Activated CD4-positive, alpha-beta memory T cell treated with anti-CD3 and anti-CD28 coated beads, Interleukin-2, amount 10 ng/mL, durations not matched to agents 7 days and 5 days (primary cell): ENCODE measurements at regions of chr17 and their contacts with region 1.

Region 1: GRCh38 chr17:5065227-5065744 is 13.0 kb upstream of the ZFP3 start:
- DNase-seq: no peak
- H3K4me3 Mint-ChIP-seq: no peak overlapping the region
- H3K27ac Mint-ChIP-seq: no peak overlapping the region
- H3K4me1 Mint-ChIP-seq: peaks cover 8% of the 10 kb centered on the region
- H3K27me3 Mint-ChIP-seq: no peaks in the 10 kb centered on the region

Region 2: DNA sequence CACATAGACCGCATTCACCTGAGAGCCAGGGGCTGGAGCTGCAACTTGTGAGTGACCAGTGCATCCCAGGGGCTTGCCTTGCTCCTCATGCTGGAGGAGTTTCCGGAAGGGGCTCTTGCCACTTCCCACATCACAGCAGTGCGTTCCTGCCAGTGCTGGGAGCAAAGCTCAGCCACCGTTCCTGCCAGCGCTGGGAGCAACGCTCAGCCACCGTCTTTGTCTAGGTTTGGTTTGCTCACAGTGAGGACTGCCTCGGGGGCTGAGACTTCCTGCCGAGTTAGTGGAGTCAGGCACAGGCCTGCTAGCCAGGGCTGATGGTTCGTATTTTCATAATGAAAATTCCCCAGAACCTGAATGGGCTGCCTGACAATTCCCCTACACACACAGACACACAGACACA is 157.0 kb before region 1 on chr17:
- CTCF ChIA-PET with region 1: interaction called, 12 read pairs
- POLR2A ChIA-PET with region 1: no interaction called
- DNase-seq: no peak
- H3K4me3 Mint-ChIP-seq: no peak overlapping the region
- H3K27ac Mint-ChIP-seq: no peak overlapping the region
- H3K4me1 Mint-ChIP-seq: peaks cover 7% of the 10 kb centered on the region
- H3K27me3 Mint-ChIP-seq: peaks cover 13% of the 10 kb centered on the region

Region 3: DNA sequence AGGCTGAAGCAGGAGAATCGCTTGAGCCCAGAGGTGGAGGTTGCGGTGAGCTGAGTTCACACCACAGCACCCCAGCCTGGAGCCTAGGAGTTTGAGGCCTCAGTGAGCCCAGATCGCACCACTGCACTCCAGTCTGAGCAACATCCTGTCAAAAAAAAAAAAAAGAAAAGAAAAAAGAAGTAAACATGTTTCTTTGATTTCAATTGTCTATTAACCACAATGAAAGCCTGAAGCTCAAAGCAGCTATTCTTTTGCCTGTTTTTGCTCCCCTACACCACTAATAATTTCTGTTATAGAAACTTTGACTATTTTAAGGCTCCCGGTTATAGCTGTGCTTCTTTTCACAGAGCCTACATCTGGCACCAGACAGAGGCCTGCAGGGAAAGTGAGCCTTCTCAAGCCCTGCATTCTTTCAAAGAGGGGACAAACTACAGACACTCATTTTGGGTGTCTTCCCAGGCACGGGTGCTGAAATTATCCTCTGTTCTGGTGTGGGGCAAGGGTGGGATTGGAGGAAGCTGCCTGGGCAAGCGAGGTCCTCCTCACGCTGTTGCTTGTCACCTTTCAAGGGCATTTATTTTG is 15.9 kb before region 1 on chr17:
- CTCF ChIA-PET with region 1: interaction called, 12 read pairs
- POLR2A ChIA-PET with region 1: no interaction called
- DNase-seq: peak; percentile 80
- H3K4me3 Mint-ChIP-seq: no peak overlapping the region
- H3K27ac Mint-ChIP-seq: peak overlapping the region; percentile 76
- H3K4me1 Mint-ChIP-seq: peaks cover 51% of the 10 kb centered on the region
- H3K27me3 Mint-ChIP-seq: no peaks in the 10 kb centered on the region

Region 4: DNA sequence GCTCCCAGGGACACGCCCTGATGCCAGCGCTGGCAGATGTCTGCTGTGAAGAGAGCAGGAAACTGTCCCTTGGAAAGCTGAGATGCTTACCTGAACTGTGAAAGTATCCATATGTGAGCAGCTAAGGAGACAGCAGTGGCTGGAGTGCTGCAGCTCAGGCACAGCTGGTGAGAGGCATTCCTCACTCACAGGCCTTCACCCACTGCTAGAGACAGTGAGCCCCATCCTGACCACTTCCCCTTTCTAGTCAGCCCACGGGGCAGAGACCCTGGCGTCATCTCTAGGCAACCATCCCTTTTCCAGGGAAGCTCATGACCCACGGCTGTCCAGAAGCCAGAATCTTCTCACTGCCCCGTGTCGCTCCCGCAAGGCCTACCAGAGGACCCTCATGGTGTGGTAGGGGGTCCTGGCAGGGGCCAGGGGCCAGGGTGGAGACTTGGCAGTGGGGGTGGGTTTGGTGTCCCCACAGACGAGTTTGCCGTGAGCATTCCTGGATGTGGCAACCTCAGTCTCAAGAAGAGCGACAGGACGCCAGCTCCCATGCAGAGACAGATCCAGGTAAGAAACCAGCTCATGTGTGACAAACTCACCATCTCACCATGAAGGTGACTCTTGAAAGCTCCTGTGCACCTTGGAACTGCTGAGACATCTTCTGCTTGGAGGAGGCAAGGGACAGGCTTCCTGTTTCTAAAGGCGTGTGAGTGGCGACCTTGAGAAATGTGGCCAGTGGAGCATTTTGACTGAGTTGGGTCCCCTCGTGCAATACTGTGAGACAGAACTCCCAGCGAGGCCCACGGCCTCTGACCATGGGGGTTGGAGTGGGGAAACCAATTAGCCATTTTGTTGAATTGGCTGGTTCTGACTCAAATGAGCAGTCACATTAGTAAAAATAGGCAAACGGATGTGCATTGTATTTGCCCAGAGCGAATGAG is 169.6 kb after region 1 on chr17 and contains the start of gene SCIMP:
- CTCF ChIA-PET with region 1: no interaction called
- POLR2A ChIA-PET with region 1: no interaction called
- DNase-seq: no peak
- H3K4me3 Mint-ChIP-seq: no peak within 1 kb of the TSS
- H3K27ac Mint-ChIP-seq: no peak within 1 kb of the TSS
- H3K4me1 Mint-ChIP-seq: peaks cover 10% of the 10 kb centered on the region
- H3K27me3 Mint-ChIP-seq: no peaks in the 10 kb centered on the region
- total RNA-seq, gene SCIMP: not detected